Gastrocnemius medialis (tissue), 4 donors: ENCODE measurements at regions of chr14 and their contacts with region 1.

Region 1: DNA sequence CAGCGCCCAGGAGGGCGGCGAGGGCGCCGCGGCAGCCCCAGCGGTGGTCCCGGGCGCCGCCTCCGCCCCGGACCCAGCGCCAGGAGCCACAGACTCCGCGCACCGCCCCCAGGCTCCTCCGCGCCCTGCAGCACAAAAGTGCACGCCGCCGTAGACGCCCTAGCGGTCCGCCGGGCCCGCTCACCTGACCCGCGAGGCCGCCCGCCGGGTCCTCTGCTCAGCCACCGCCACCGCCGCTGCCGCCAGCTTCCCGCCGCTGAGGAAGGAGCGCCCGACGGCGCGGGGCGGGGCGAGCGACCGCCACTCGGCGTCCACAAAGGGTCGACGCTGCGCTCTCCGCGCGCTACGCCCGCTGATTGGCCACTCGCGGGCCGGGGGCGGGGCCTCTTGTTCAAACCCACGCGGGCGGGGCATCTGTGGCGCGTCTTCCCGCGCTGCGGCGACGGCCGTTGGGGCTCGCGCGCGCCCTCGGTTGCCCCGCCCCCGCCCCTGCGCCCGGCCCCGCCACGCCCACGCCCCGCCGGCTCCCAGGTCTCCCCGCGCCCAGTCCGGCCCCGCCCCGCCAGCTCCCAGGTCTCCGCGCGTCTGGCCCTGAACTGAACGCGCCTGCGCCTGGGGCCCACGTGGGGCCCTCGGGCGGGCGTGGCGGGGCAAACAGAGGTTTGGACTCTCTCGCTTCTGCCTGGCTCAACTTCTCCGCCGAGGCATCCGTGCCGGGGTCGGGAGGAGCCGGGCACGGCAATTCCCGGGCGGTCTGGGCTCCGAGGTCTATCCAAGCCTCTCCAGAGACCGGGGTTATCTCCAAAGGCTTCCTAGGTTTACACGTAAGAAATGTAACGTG is at the start of gene CDCA4:
- DNase-seq: peak; percentile 88 to 94
- ATAC-seq: peak; percentile 97
- H3K4me3 ChIP-seq: peak within 1 kb of the TSS; percentile 70 to 83 (median 80)
- H3K27ac ChIP-seq: peak within 1 kb of the TSS; percentile 75 to 91 (median 86)
- H3K4me1 ChIP-seq: peaks cover 16 to 23% of the 10 kb centered on the region in 2 donors
- H3K27me3 ChIP-seq: no peaks in the 10 kb centered on the region
- CTCF ChIP-seq: peak in 1 of 5 experiments; percentile 16
- POLR2A ChIP-seq: peak; percentile 75 to 82
- total RNA-seq, gene CDCA4: 0.71 to 2.2 (median 1.8) TPM

Region 2: GRCh38 chr14:104826189-104826860 is 194.7 kb before region 1 on chr14:
- in situ Hi-C with region 1: no loop called
- intact Hi-C with region 1: loop called (anchors 5 kb)
- DNase-seq: peak; percentile 71 to 81
- ATAC-seq: peak; percentile 94 to 95
- H3K4me3 ChIP-seq: peak overlapping the region; percentile 56 to 76 (median 62)
- H3K27ac ChIP-seq: peak overlapping the region in 1 of 4 donors; percentile 26
- H3K4me1 ChIP-seq: peaks cover 0 to 18% of the 10 kb centered on the region in 2 donors
- H3K27me3 ChIP-seq: peaks cover 0 to 4% (median 3%) of the 10 kb centered on the region in 3 donors
- CTCF ChIP-seq: peak; percentile 46 to 95 (median 87)
- POLR2A ChIP-seq: no peak

Region 3: GRCh38 chr14:104897330-104898194 is 123.5 kb before region 1 on chr14:
- in situ Hi-C with region 1: no loop called
- intact Hi-C with region 1: no loop called
- DNase-seq: peak in 1 of 2 donors; percentile 11
- ATAC-seq: no peak
- H3K4me3 ChIP-seq: no peak overlapping the region
- H3K27ac ChIP-seq: no peak overlapping the region
- H3K4me1 ChIP-seq: no peaks in the 10 kb centered on the region
- H3K27me3 ChIP-seq: no peaks in the 10 kb centered on the region
- CTCF ChIP-seq: no peak
- POLR2A ChIP-seq: no peak

Region 4: DNA sequence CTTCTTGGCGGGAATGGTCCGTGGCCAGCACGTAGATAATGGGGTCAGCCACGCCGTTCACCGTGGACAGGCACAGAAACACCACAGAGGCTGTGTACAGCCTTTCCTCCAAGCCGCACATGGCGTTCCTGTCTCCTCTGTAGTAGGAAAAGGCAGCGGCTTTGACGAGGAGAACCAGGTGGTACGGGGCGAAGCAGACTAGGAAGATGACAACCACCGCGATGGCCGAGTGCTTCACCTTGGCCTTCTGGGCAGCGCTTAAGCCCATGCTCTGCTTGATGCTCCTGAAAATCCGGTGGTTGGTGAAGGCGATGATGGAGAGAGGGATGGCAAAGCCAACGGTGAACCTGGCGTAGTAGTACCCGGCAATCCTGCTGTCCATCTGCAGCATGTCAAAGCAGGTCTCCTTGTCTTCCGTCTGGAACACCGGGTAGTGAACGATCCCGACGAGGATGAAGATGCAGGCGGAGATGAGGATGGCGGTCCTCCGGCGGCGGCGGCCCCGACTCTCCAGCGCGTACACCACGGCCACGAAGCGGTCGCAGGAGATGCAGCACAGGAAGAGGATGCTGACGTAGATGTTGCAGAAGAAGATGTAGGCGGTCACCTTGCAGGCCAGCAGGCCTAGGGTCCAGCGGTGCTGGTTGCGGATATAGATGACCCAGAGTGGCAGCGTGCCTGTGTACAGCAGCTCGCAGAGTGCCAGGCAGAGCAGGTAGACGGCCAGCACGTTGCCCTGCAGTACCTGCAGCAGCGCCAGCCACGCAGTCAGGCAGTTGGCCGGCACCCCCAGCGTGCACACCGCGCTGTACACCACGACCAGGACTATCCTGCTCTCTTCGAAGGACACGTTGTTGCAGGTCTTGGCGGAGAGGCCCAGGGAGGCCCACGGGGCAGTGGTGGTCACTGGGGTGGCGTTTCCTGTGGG is 30.4 kb after region 1 on chr14:
- in situ Hi-C with region 1: no loop called
- intact Hi-C with region 1: no loop called
- DNase-seq: no peak
- ATAC-seq: no peak
- H3K4me3 ChIP-seq: no peak overlapping the region
- H3K27ac ChIP-seq: no peak overlapping the region
- H3K4me1 ChIP-seq: no peaks in the 10 kb centered on the region
- H3K27me3 ChIP-seq: no peaks in the 10 kb centered on the region
- CTCF ChIP-seq: no peak
- POLR2A ChIP-seq: no peak